PC-3 (cell line): ENCODE measurements at regions of chr7 and their contacts with region 1.

Region 1: GRCh38 chr7:106659963-106660861 is 746 bp downstream of the CCDC71L start:
- DNase-seq: peak; percentile 79
- ATAC-seq: peak; percentile 66
- H3K4me3 ChIP-seq: peak overlapping the region; percentile 88
- H3K27ac ChIP-seq: peak overlapping the region; percentile 38
- H3K4me1 ChIP-seq: peaks cover 8% of the 10 kb centered on the region; the same call in 1 of the 2 replicates
- H3K27me3 ChIP-seq: no peaks in the 10 kb centered on the region
- CTCF ChIP-seq: peak; percentile 80

Region 2: DNA sequence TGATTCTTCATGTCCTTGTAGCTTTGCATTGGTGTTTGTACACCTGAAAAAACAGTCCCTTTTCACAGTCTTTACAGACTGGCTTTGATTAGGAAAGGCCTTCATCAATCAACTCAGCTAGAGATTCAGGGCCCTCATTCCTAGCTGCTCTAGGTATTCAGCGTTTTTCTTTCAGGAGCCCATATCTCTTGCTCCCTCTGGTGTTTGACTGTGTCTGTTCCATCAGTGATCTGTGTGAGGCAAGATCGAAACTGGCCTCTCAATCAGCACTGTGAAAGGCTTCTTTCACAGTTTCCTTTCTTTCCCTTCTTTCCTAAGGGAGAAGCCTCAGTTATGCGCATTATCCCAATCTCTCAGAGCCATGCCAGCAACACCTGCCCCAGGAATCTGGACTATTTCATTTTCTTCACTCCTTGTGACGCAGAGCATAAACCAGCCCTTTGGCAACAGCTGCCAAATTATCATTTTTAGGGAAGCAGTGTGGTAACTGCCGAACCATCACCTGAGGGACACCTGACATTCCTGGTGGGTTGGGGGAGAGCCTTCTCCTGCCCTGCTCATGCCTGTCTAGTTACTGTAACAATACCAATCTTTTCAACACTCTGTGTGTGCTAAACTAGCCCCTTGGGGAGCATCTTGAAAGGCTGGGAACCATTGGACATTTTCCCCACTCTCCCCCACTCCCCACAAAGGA is 76.4 kb after region 1 on chr7:
- CTCF ChIA-PET with region 1: interaction called, 50 read pairs
- POLR2A ChIA-PET with region 1: no interaction called
- intact Hi-C with region 1: loop called (anchors 1 kb)
- DNase-seq: peak; percentile 72
- ATAC-seq: peak; percentile 97
- H3K4me3 ChIP-seq: no peak overlapping the region
- H3K27ac ChIP-seq: no peak overlapping the region
- H3K4me1 ChIP-seq: no peaks in the 10 kb centered on the region
- H3K27me3 ChIP-seq: no peaks in the 10 kb centered on the region
- CTCF ChIP-seq: peak; percentile 73